MCF 10A (cell line): ENCODE measurements at regions of chr6 and their contacts with region 1.

Region 1: DNA sequence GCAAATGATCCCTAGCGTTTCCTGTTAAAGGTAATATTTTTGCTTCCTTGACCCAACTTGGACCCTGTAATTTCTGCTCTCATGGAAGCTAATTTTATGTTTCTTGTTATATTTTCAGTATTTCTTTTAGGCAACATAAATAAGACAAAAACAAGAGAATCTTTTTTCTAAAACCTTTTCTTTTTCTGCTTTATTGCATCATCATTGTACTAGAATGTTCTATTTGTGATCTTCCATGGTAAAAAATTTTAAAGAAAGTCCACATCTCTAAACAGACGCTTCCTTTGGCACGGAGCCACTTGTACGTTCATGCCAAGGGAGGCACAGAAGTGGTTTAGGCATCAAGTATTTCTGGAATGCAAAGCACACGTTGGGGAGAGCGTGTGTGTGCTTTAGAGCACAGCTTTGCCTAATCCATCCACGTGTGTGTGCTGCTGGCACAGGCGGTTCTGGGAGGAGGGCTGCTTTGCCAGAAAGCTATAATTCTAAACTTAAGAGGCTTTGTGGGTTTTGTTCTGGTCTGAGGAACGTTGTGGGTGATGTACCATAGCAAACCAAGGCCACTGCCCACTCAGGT is 98.3 kb downstream of the SASH1 start:
- DNase-seq: peak; percentile 95
- H3K4me3 Mint-ChIP-seq: peak overlapping the region; percentile 44
- H3K27ac Mint-ChIP-seq: peak overlapping the region; percentile 95
- H3K4me1 Mint-ChIP-seq: peaks cover 28% of the 10 kb centered on the region
- H3K27me3 Mint-ChIP-seq: no peaks in the 10 kb centered on the region
- CTCF ChIP-seq: no peak

Region 2: GRCh38 chr6:148037496-148037895 is 403.5 kb before region 1 on chr6:
- CTCF ChIA-PET with region 1: no interaction called
- POLR2A ChIA-PET with region 1: no interaction called
- intact Hi-C with region 1: no loop called
- DNase-seq: no peak
- H3K4me3 Mint-ChIP-seq: no peak overlapping the region
- H3K27ac Mint-ChIP-seq: no peak overlapping the region
- H3K4me1 Mint-ChIP-seq: no peaks in the 10 kb centered on the region
- H3K27me3 Mint-ChIP-seq: no peaks in the 10 kb centered on the region
- CTCF ChIP-seq: no peak

Region 3: DNA sequence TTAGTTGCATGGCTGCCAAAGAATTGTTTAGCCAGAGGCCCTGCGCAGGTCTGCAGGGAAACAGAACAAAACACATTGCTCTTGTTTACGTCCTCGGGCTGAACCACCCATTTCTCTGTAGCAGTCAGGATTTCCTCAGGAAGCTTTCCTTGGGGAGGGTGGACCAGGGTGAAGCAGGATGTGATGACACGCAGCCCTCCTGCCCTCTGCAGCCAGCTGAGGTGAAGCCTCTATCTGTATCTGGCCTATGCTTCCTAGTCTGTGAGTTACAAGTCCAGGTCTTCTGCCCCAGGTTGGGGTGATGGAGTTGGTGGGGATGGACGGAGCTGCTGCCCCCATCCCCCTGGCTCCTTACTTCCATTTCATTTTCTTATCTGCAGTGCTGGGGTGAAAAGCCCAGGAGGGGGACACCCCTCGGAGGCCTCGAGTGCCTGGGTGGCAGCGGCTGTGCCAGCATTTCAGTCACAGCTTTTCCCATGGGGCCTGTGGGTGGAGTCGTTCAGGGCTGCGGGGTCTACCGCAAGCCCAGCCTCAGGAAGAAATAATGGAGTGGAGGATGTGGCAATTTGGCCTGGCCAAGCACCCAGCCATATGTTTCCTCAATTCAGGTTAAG is 73.4 kb before region 1 on chr6:
- CTCF ChIA-PET with region 1: no interaction called
- POLR2A ChIA-PET with region 1: interaction called, 10 read pairs
- intact Hi-C with region 1: no loop called
- DNase-seq: peak; percentile 51
- H3K4me3 Mint-ChIP-seq: no peak overlapping the region
- H3K27ac Mint-ChIP-seq: no peak overlapping the region
- H3K4me1 Mint-ChIP-seq: peaks cover 28% of the 10 kb centered on the region
- H3K27me3 Mint-ChIP-seq: no peaks in the 10 kb centered on the region
- CTCF ChIP-seq: no peak

Region 4: DNA sequence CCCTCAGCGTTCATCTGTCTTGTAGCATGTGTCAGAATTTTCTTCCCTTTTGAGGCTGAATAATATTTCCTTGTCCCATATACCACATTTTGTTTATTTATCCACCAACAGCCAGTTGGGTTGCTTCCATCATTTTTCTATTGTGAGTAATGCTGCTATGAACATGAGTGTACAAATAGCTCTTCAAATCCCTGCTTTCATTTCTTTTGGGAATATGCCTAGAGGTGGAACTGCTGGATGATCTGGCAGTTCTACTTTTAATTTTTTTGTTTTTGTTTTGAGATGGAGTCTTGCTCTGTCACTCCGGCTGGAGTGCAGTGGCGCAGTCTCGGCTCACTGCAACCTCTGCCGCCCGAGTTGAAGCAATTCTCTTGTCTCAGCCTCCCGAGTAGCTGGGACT is 33.6 kb before region 1 on chr6:
- CTCF ChIA-PET with region 1: no interaction called
- POLR2A ChIA-PET with region 1: interaction called, 9 read pairs
- intact Hi-C with region 1: loop called (anchors 5 kb)
- DNase-seq: peak; percentile 88
- H3K4me3 Mint-ChIP-seq: peak overlapping the region; percentile 2
- H3K27ac Mint-ChIP-seq: peak overlapping the region; percentile 78
- H3K4me1 Mint-ChIP-seq: peaks cover 29% of the 10 kb centered on the region
- H3K27me3 Mint-ChIP-seq: no peaks in the 10 kb centered on the region
- CTCF ChIP-seq: no peak